ENCODE measurements at regions of chr21 and their contacts with region 1.

Region 1: GRCh38 chr21:42258153-42258884 is 39.4 kb downstream of the ABCG1 start:
- DNase-seq: peak; percentile 49
- H3K4me3 ChIP-seq: no peak overlapping the region
- H3K27ac ChIP-seq: no peak overlapping the region
- H3K4me1 ChIP-seq: peaks cover 13% of the 10 kb centered on the region
- H3K27me3 ChIP-seq: no peaks in the 10 kb centered on the region
- CTCF ChIP-seq: peak; percentile 94 to 96
- POLR2A ChIP-seq: no peak

Region 2: DNA sequence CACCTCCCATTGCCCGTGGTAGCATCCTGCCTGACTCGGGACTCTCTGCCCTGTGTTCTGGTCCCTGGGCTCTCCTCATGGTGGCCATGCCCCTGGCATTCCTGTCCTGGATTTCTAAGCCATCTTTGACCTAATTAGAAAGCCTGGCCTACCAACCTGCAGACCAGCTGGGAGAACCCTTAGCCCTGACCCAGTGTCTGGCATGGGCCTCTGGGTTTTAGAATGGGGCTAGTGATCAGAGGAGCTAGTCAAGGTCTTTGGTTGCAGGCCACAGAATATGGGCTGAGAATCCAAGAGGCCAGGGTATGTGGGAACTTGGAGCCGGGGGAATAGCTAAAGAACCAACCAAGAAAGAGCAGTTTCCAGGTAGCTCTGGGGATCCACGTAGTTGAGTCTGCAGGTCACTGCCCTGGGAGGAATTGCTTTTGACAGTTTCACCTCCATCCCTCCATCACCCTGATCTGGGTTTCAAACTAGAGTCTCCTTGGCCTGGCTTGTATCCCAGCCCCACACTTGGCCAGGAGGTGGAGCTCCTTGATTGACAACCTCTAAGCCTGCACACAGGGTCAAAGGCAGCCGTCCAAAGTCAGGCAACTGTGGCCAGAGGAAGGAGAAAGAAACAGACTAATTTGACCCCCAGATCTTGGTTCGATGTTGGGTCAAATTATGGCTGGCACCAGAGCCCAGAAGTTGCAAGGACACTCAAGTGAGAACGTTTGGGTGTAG is 94.1 kb before region 1 on chr21:
- CTCF ChIA-PET with region 1: interaction called, 108 read pairs
- POLR2A ChIA-PET with region 1: no interaction called
- dilution Hi-C with region 1: no loop called
- intact Hi-C with region 1: loop called (anchors 1 kb)
- DNase-seq: peak; percentile 53
- H3K4me3 ChIP-seq: no peak overlapping the region
- H3K27ac ChIP-seq: no peak overlapping the region
- H3K4me1 ChIP-seq: no peaks in the 10 kb centered on the region
- H3K27me3 ChIP-seq: no peaks in the 10 kb centered on the region
- CTCF ChIP-seq: peak; percentile 64 to 72
- POLR2A ChIP-seq: no peak

Region 3: GRCh38 chr21:42220138-42220701 is 38.1 kb before region 1 on chr21:
- CTCF ChIA-PET with region 1: interaction called, 22 read pairs
- POLR2A ChIA-PET with region 1: no interaction called
- dilution Hi-C with region 1: no loop called
- intact Hi-C with region 1: loop called (anchors 1 kb)
- DNase-seq: peak; percentile 91
- H3K4me3 ChIP-seq: peak overlapping the region; percentile 53 to 65 (median 63)
- H3K27ac ChIP-seq: peak overlapping the region; percentile 53
- H3K4me1 ChIP-seq: peaks cover 24% of the 10 kb centered on the region
- H3K27me3 ChIP-seq: peaks cover 2 to 6% of the 10 kb centered on the region in 2 experiments
- CTCF ChIP-seq: no peak
- POLR2A ChIP-seq: no peak

Region 4: GRCh38 chr21:42245331-42246193 is 12.8 kb before region 1 on chr21:
- CTCF ChIA-PET with region 1: interaction called, 18 read pairs
- POLR2A ChIA-PET with region 1: no interaction called
- dilution Hi-C with region 1: no loop called
- intact Hi-C with region 1: no loop called
- DNase-seq: no peak
- H3K4me3 ChIP-seq: no peak overlapping the region
- H3K27ac ChIP-seq: no peak overlapping the region
- H3K4me1 ChIP-seq: no peaks in the 10 kb centered on the region
- H3K27me3 ChIP-seq: peaks cover 7 to 21% of the 10 kb centered on the region in 2 experiments
- CTCF ChIP-seq: no peak
- POLR2A ChIP-seq: no peak

Region 5: DNA sequence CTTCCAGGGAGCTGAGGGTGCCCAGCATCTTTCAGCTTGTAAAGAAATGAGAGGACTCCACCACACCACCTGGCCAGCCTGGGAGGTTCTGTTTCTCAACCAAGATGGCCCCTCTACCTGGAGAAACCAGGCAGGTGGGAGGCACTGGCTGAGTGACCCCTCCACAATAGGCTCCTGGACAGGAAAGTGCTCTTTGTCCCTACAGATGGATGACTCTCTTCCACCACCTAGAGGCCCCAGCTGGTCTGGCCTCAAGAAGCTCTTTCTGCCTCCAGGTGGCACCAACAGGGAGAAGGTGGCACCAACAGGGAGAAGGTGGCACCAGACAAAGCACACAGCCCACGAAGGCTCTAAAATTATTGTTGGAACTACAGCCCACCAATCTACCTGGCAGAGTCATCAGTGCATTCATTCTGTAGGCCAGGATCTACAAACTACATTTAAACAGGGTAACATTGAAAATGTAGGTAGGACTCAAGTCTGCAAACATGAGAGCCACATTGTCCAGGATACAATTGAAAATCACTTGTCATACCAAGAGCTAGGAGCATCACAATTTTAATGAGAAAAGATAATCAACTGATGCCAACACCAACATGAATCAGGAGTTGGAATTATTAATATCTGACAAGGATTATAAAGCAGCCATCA is 123.1 kb after region 1 on chr21:
- CTCF ChIA-PET with region 1: interaction called, 10 read pairs
- POLR2A ChIA-PET with region 1: no interaction called
- dilution Hi-C with region 1: no loop called
- intact Hi-C with region 1: no loop called
- DNase-seq: peak; percentile 31
- H3K4me3 ChIP-seq: no peak overlapping the region
- H3K27ac ChIP-seq: no peak overlapping the region
- H3K4me1 ChIP-seq: no peaks in the 10 kb centered on the region
- H3K27me3 ChIP-seq: no peaks in the 10 kb centered on the region
- CTCF ChIP-seq: peak; percentile 68 to 69
- POLR2A ChIP-seq: no peak

Measured in endothelial cell of umbilical vein (primary cell).